Activated CD4-positive, alpha-beta T cell treated with anti-CD3 and anti-CD28 coated beads for 36 hours (primary cell): ENCODE measurements at regions of chr10 and their contacts with region 1.

Region 1: GRCh38 chr10:110354322-110354766 is 49.6 kb upstream of the SMNDC1 start:
- DNase-seq: peak; percentile 94
- ATAC-seq: peak; percentile 39
- H3K4me3 Mint-ChIP-seq: peak overlapping the region; percentile 68
- H3K27ac Mint-ChIP-seq: peak overlapping the region; percentile 98
- H3K4me1 Mint-ChIP-seq: peaks cover 67% of the 10 kb centered on the region
- H3K27me3 Mint-ChIP-seq: no peaks in the 10 kb centered on the region

Region 2: GRCh38 chr10:110304780-110305421 is 49.4 kb before region 1 on chr10 and contains the start of gene SMNDC1:
- CTCF ChIA-PET with region 1: interaction called, 14 read pairs
- POLR2A ChIA-PET with region 1: interaction called, 5 read pairs
- intact Hi-C with region 1: loop called in 1 of 2 experiments (anchors 2 kb)
- DNase-seq: peak; percentile 98
- ATAC-seq: peak; percentile 93
- H3K4me3 Mint-ChIP-seq: peak within 1 kb of the TSS; percentile 95
- H3K27ac Mint-ChIP-seq: peak within 1 kb of the TSS; percentile 98
- H3K4me1 Mint-ChIP-seq: peaks cover 42% of the 10 kb centered on the region
- H3K27me3 Mint-ChIP-seq: no peaks in the 10 kb centered on the region
- total RNA-seq, gene SMNDC1: 44.2 to 56.7 TPM

Region 3: DNA sequence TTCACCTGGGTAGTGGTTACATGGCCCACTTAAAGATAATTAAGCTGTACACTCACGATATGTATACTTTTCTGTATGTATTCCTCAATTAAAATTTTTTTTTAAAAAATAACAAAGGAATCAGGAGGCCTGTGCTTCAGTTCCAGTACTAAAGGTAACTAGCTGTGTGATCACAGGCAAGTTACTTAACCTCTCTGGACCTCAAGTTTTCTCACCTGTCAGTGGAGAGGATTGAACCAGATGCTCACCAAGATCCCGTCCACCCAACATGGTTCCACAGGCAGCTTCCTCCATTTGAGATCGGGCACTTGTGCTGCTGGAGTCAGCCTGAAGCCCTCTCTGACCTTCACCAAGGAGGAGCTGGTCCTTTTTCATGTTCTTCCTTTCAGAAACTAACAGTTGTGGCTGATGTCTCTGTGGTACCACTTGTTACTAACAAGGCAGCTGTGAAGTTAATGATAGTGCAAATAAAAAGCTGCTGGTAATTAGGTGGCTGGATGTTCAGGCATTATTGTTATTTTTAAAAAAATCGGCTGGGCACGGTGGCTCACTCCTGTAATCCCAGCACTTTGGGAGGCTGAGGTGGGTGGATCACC is 20.2 kb before region 1 on chr10:
- CTCF ChIA-PET with region 1: interaction called, 19 read pairs
- POLR2A ChIA-PET with region 1: interaction called, 3 read pairs
- intact Hi-C with region 1: no loop called
- DNase-seq: no peak
- ATAC-seq: no peak
- H3K4me3 Mint-ChIP-seq: no peak overlapping the region
- H3K27ac Mint-ChIP-seq: no peak overlapping the region
- H3K4me1 Mint-ChIP-seq: peaks cover 9% of the 10 kb centered on the region
- H3K27me3 Mint-ChIP-seq: peaks cover 1% of the 10 kb centered on the region

Region 4: DNA sequence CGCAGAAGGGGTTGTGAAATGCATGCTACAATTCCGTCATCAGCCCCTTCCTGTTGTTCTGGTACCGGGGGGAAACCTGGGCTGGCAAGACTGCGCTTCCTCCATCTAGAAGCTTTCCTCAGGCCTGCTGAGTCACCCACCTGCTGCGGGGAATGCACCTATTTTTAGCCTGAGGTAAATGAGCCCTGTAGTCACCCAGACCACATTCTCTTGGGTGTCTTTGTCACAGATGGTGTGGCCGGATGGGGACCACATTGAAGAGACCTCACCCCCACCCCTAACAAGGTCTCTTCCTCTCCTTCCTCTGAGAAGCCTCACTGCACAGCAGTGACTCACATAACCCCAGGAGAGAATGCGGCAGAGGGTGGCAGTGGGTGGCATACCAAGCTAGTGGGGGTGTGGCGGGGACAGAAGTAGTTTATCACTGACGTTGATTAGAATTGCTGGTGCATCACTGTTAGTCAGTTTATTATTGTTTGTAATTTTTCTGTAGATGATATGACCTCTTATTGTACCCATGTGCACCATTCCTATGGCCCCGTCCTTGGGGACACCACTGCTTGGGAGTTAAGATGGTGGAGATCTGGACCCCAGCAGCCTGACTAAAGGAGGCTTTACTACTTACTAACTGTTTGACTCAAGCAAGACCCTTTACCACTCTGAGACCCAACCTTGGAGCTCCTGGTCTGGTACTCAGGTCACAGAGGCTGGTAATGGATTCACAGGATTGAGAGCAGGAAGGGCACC is 60.4 kb after region 1 on chr10:
- CTCF ChIA-PET with region 1: interaction called, 28 read pairs
- POLR2A ChIA-PET with region 1: interaction called, 16 read pairs
- intact Hi-C with region 1: loop called (anchors 1 kb)
- DNase-seq: peak; percentile 93
- ATAC-seq: peak; percentile 94
- H3K4me3 Mint-ChIP-seq: peak overlapping the region; percentile 34
- H3K27ac Mint-ChIP-seq: peak overlapping the region; percentile 91
- H3K4me1 Mint-ChIP-seq: peaks cover 72% of the 10 kb centered on the region
- H3K27me3 Mint-ChIP-seq: no peaks in the 10 kb centered on the region

Region 5: GRCh38 chr10:110512461-110513187 is 158.3 kb after region 1 on chr10:
- CTCF ChIA-PET with region 1: interaction called, 11 read pairs
- POLR2A ChIA-PET with region 1: interaction called, 5 read pairs
- intact Hi-C with region 1: no loop called
- DNase-seq: peak; percentile 80
- ATAC-seq: peak; percentile 97
- H3K4me3 Mint-ChIP-seq: no peak overlapping the region
- H3K27ac Mint-ChIP-seq: peak overlapping the region; percentile 81
- H3K4me1 Mint-ChIP-seq: peaks cover 51% of the 10 kb centered on the region
- H3K27me3 Mint-ChIP-seq: no peaks in the 10 kb centered on the region

Region 6: DNA sequence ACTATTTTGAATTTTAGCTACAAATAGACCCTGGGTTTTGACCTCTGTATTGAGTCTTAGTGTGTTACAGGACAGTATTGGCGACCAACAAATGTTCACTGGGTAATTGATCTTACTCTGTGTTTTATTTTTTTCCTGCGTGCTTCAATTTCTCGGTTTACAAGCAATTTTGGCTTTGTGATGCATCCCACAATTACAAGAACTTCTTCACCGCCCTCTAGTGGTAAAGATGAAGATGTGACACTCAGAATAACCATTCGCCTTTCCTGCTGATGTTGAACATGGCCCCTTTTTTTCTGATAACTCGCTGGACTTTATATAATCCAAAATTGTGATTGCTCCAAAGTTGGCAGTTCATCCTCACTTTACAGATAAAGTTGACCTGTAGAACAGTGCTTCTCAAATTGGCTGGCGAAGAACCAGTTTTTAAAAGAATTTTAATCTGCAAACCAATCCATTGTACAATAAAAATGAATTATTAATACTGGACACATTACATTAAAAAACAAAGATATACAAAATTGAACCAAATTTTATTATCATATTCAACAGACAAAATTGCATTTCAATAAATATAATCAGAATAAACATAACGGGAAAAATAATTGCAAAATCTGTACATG is 192.9 kb after region 1 on chr10:
- CTCF ChIA-PET with region 1: interaction called, 25 read pairs
- POLR2A ChIA-PET with region 1: no interaction called
- intact Hi-C with region 1: loop called (anchors 1 kb)
- DNase-seq: no peak
- ATAC-seq: peak; percentile 84
- H3K4me3 Mint-ChIP-seq: no peak overlapping the region
- H3K27ac Mint-ChIP-seq: peak overlapping the region; percentile 56
- H3K4me1 Mint-ChIP-seq: peaks cover 8% of the 10 kb centered on the region
- H3K27me3 Mint-ChIP-seq: peaks cover 6% of the 10 kb centered on the region

Region 7: DNA sequence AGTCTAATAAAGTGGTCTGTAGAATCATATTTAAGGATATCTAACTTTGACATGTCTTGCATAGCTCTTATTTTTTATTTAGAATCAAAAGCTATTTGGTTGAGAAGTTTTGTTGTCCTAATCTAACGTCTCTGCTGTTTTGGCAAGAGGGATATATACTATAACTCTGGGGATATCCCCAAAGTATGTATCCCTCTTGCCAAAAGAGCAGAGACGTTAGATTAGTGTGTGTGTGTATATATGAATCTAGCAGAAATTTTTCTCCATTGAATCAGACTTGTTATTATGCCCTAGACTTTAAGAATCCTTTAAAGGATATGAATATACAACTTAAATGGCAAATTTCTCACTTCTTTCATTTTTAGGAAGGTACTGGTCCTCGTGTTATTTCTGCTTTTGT is 222.7 kb after region 1 on chr10:
- CTCF ChIA-PET with region 1: no interaction called
- POLR2A ChIA-PET with region 1: no interaction called
- intact Hi-C with region 1: no loop called
- DNase-seq: no peak
- ATAC-seq: no peak
- H3K4me3 Mint-ChIP-seq: no peak overlapping the region
- H3K27ac Mint-ChIP-seq: no peak overlapping the region
- H3K4me1 Mint-ChIP-seq: peaks cover 34% of the 10 kb centered on the region
- H3K27me3 Mint-ChIP-seq: no peaks in the 10 kb centered on the region

Region 8: DNA sequence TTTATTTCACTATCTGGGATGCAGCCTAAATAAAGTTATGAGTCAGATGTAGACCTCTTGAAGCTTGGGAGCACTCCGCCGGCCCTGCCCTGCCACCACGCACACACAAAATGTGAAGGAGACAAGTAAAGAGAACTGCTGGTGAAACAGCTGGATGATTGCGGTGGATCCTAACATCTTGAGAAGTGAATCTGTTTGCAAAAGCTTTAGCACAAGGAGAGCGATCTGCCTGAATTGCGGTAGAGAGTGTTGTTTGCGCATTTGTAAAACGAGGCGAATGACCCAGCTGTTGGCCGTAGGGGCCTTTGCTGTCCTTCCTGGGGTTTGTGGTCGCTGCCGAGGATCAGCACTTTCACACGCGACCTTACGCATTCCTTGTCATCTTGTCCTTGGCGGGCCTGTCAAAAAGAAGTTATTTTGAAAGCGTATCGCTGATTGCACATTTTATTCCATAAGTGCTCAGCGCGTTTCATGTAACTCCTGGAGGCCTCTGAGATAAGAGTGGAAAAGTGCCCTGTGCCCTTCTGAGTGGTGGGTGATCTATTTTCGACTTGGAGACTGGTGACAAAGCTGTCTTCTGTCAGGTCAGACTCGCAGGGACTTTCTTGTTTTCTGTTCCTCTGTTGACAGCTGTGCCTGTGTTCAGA is 330.6 kb after region 1 on chr10:
- CTCF ChIA-PET with region 1: no interaction called
- POLR2A ChIA-PET with region 1: no interaction called
- intact Hi-C with region 1: no loop called
- DNase-seq: no peak
- ATAC-seq: no peak
- H3K4me3 Mint-ChIP-seq: no peak overlapping the region
- H3K27ac Mint-ChIP-seq: no peak overlapping the region
- H3K4me1 Mint-ChIP-seq: peaks cover 3% of the 10 kb centered on the region
- H3K27me3 Mint-ChIP-seq: peaks cover 2% of the 10 kb centered on the region